Aorta (tissue), 5 donors: ENCODE measurements at regions of chr15 and their contacts with region 1.

Region 1: GRCh38 chr15:66707310-66708082 is 5.5 kb downstream of the SMAD6 start:
- DNase-seq: peak in 1 of 2 donors; percentile 70
- ATAC-seq: peak; percentile 27
- H3K4me3 ChIP-seq: peak overlapping the region in 1 of 2 donors; percentile 38
- H3K27ac ChIP-seq: peak overlapping the region in 1 of 2 donors; percentile 56
- H3K4me1 ChIP-seq: no peaks in the 10 kb centered on the region
- H3K27me3 ChIP-seq: no peaks in the 10 kb centered on the region

Region 2: GRCh38 chr15:66580643-66581042 is 126.9 kb before region 1 on chr15:
- intact Hi-C with region 1: no loop called
- DNase-seq: peak in 1 of 2 donors; percentile 67
- ATAC-seq: peak; percentile 77
- H3K4me3 ChIP-seq: no peak overlapping the region
- H3K27ac ChIP-seq: no peak overlapping the region
- H3K4me1 ChIP-seq: no peaks in the 10 kb centered on the region
- H3K27me3 ChIP-seq: no peaks in the 10 kb centered on the region

Region 3: GRCh38 chr15:66735909-66736305 is 28.4 kb after region 1 on chr15:
- intact Hi-C with region 1: loop called in 1 of 2 experiments (anchors 2 kb)
- DNase-seq: peak; percentile 60 to 86
- ATAC-seq: no peak
- H3K4me3 ChIP-seq: no peak overlapping the region
- H3K27ac ChIP-seq: peak overlapping the region in 1 of 2 donors; percentile 58
- H3K4me1 ChIP-seq: peaks cover 0 to 6% of the 10 kb centered on the region in 2 donors
- H3K27me3 ChIP-seq: no peaks in the 10 kb centered on the region

Region 4: GRCh38 chr15:66997212-66997611 is 289.7 kb after region 1 on chr15:
- intact Hi-C with region 1: no loop called
- DNase-seq: no peak
- ATAC-seq: no peak
- H3K4me3 ChIP-seq: no peak overlapping the region
- H3K27ac ChIP-seq: no peak overlapping the region
- H3K4me1 ChIP-seq: no peaks in the 10 kb centered on the region
- H3K27me3 ChIP-seq: no peaks in the 10 kb centered on the region